Activated B cell treated with CpG ODN at 0.5 μM for 24 hours (primary cell): ENCODE measurements at regions of chr9 and their contacts with region 1.

Region 1: GRCh38 chr9:115013998-115014397 is 83.6 kb upstream of the TNFSF8 start:
- DNase-seq: peak; percentile 46
- ATAC-seq: peak; percentile 79
- H3K4me3 Mint-ChIP-seq: no peak overlapping the region
- H3K27ac Mint-ChIP-seq: no peak overlapping the region
- H3K4me1 Mint-ChIP-seq: peaks cover 5% of the 10 kb centered on the region
- H3K27me3 Mint-ChIP-seq: peaks cover 8% of the 10 kb centered on the region
- CTCF ChIP-seq: no peak

Region 2: DNA sequence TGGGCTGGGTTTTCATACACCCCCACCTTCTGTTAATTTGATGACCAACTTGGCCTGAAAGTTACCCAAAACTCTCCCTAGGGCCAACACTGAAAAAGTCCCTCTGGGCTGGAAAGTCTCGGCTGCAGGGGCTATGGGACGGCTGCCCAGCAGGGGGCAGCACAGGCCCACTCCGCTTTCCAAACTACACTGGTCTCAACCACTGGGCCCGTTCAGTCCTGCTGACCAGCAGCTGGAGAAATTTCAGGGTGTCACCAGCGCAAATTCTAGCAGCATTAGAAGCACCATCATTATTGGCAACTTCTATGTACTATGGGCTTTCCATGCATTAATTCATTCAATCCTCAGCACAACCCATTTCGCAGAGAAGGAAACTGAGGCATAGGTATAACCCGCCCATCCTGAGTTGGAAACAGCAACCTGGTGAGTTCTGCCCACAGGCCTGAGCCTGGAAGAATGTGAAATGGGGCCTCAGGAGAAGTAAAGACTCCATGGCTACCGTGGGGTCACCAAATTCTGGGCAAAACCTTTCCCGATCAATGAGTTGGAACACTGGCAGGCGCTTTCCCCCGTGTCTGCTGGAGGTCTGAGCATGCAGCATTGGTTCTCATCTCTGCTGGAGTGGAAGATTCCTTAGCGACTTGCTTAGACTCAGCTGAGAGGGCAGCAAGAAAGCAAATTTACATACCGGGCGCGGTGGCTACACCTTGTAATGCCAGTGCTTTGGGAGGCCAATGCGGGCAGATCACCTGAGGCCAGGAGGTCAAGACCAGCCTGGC is 674.7 kb before region 1 on chr9:
- CTCF ChIA-PET with region 1: no interaction called
- POLR2A ChIA-PET with region 1: no interaction called
- intact Hi-C with region 1: loop called (anchors 5 kb)
- DNase-seq: peak; percentile 68
- ATAC-seq: peak; percentile 79
- H3K4me3 Mint-ChIP-seq: peak overlapping the region; percentile 6
- H3K27ac Mint-ChIP-seq: peak overlapping the region; percentile 74
- H3K4me1 Mint-ChIP-seq: peaks cover 32% of the 10 kb centered on the region
- H3K27me3 Mint-ChIP-seq: no peaks in the 10 kb centered on the region
- CTCF ChIP-seq: peak; percentile 87

Region 3: GRCh38 chr9:114662081-114662989 is 351.7 kb before region 1 on chr9:
- CTCF ChIA-PET with region 1: interaction called, 6 read pairs
- POLR2A ChIA-PET with region 1: interaction called, 5 read pairs
- intact Hi-C with region 1: loop called (anchors 1 kb)
- DNase-seq: peak; percentile 37
- ATAC-seq: peak; percentile 100
- H3K4me3 Mint-ChIP-seq: no peak overlapping the region
- H3K27ac Mint-ChIP-seq: no peak overlapping the region
- H3K4me1 Mint-ChIP-seq: peaks cover 6% of the 10 kb centered on the region
- H3K27me3 Mint-ChIP-seq: no peaks in the 10 kb centered on the region
- CTCF ChIP-seq: peak; percentile 45

Region 4: GRCh38 chr9:114738581-114739316 is 275.2 kb before region 1 on chr9:
- CTCF ChIA-PET with region 1: interaction called, 32 read pairs
- POLR2A ChIA-PET with region 1: no interaction called
- intact Hi-C with region 1: loop called (anchors 1 kb)
- DNase-seq: peak; percentile 36
- ATAC-seq: peak; percentile 89
- H3K4me3 Mint-ChIP-seq: no peak overlapping the region
- H3K27ac Mint-ChIP-seq: peak overlapping the region; percentile 46
- H3K4me1 Mint-ChIP-seq: peaks cover 14% of the 10 kb centered on the region
- H3K27me3 Mint-ChIP-seq: peaks cover 3% of the 10 kb centered on the region
- CTCF ChIP-seq: peak; percentile 64

Region 5: DNA sequence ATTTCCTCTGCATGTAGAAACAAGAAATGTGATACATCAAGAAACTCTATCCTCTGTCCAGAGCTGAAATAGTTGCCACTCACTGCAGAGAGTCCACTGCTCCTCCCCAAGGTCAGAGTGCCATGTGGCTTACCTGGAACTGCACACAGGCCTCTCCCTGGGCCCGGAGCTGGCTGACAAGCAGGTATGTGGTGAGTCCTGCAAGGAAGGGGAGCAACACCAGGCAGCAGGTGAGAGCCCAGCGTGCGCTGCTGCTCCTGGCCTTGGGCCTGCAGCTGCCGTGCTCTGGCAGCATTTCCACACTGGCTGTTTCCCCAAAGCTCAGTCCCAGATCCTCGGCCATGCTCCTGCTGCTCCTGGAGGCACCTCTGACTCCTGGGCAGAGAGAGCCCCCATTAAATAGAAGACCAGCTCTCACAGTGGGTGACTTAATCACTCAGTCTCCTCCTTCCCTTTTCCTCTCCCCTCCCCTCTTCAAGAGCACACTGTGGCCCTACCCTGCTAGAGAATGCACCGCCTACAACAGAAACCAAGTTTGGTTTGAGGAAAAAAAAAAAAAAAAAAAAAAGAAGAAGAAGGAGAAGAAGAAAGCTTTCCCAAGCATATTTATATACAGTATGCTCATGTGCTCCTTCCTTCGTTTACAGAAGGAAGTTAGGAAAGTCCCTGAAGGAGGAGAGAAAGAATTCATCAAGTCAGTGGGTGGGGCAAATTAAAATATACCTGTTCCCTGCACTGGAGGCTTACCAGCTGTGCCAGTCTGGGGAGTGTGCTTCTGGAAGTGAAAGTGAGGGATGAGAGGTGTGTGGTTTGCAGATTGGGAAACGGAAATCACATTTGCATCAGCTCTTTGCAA is 208.1 kb before region 1 on chr9 and contains the start of gene TNFSF15:
- CTCF ChIA-PET with region 1: no interaction called
- POLR2A ChIA-PET with region 1: no interaction called
- intact Hi-C with region 1: loop called (anchors 10 kb)
- DNase-seq: no peak
- ATAC-seq: peak; percentile 85
- H3K4me3 Mint-ChIP-seq: peak within 1 kb of the TSS; percentile 66
- H3K27ac Mint-ChIP-seq: peak within 1 kb of the TSS; percentile 19
- H3K4me1 Mint-ChIP-seq: peaks cover 40% of the 10 kb centered on the region
- H3K27me3 Mint-ChIP-seq: peaks cover 2% of the 10 kb centered on the region
- CTCF ChIP-seq: no peak
- total RNA-seq, gene TNFSF15: 0.10 and 0.22 TPM in 2 replicates

Region 6: DNA sequence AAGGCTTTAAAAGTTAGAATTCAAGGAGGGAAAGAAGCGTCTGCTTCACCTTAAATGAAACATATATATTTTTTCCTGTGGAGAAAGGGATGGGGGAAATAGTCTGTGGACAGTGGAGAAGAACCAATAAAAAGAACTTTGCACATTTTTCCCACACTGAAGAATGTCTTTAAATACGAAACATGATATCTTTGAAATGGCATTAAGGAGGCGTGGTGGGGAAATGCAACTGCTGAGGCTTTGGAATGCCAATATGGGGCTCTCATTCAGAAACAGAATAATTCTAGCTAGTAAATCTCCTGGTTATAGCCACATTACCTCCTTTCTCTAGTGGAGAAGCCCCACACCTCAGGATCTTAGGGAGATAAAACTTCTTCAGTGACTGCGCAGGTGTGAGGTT is 57.2 kb after region 1 on chr9:
- CTCF ChIA-PET with region 1: no interaction called
- POLR2A ChIA-PET with region 1: no interaction called
- intact Hi-C with region 1: no loop called
- DNase-seq: no peak
- ATAC-seq: no peak
- H3K4me3 Mint-ChIP-seq: no peak overlapping the region
- H3K27ac Mint-ChIP-seq: no peak overlapping the region
- H3K4me1 Mint-ChIP-seq: no peaks in the 10 kb centered on the region
- H3K27me3 Mint-ChIP-seq: peaks cover 20% of the 10 kb centered on the region
- CTCF ChIP-seq: no peak

Region 7: DNA sequence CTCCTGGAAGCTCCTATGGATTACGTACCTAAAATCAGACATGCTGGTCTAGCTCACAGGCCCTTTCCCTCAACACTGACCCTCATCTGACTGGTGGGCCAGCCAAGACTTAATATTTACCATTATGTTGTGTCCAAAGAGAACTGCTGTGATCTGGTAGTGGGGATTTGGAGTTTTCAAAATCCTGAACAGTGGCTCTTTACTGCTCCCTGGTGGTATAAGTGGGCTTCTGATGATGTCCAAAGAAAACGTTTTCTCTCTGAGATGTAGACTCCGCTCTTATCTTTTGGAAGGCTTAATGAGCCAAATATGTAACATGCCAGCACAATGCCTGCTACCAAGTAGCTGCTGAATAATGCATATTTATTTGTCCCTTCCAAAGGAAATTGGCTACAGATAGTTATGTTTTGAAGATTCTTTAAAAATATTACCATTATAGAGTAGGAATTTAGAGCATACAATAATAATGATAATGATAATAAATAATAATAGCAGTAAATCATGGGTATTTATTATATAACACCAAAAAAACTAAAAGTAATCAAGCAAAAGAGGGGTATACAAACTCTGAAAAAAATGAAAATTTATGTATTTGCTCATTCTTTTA is 510.6 kb after region 1 on chr9:
- CTCF ChIA-PET with region 1: interaction called, 4 read pairs
- POLR2A ChIA-PET with region 1: no interaction called
- intact Hi-C with region 1: loop called (anchors 1 kb)
- DNase-seq: no peak
- ATAC-seq: peak; percentile 34
- H3K4me3 Mint-ChIP-seq: no peak overlapping the region
- H3K27ac Mint-ChIP-seq: no peak overlapping the region
- H3K4me1 Mint-ChIP-seq: no peaks in the 10 kb centered on the region
- H3K27me3 Mint-ChIP-seq: peaks cover 5% of the 10 kb centered on the region
- CTCF ChIP-seq: no peak